ENCODE measurements at regions of chr11 and their contacts with region 1.

Region 1: GRCh38 chr11:107840129-107840484 is 18.5 kb downstream of the SLC35F2 start:
- DNase-seq: no peak
- H3K4me3 ChIP-seq: peak overlapping the region in 1 of 2 donors; percentile 55
- H3K27ac ChIP-seq: peak overlapping the region; percentile 93
- H3K4me1 ChIP-seq: peaks cover 6 to 15% of the 10 kb centered on the region in 2 donors
- H3K27me3 ChIP-seq: no peaks in the 10 kb centered on the region
- CTCF ChIP-seq: no peak

Region 2: GRCh38 chr11:107799218-107799859 is 40.8 kb before region 1 on chr11:
- intact Hi-C with region 1: loop called (anchors 5 kb)
- DNase-seq: peak; percentile 30 to 91
- H3K4me3 ChIP-seq: no peak overlapping the region
- H3K27ac ChIP-seq: peak overlapping the region; percentile 67 to 86
- H3K4me1 ChIP-seq: peaks cover 4 to 10% of the 10 kb centered on the region in 2 donors
- H3K27me3 ChIP-seq: no peaks in the 10 kb centered on the region
- CTCF ChIP-seq: peak; percentile 59 to 95 (median 94)

Measured in ascending aorta (tissue), 2 donors.